Naive thymus-derived CD4-positive, alpha-beta T cell (primary cell): ENCODE measurements at regions of chr18 and their contacts with region 1.

Region 1: GRCh38 chr18:35029770-35030169 is 11.4 kb upstream of the MAPRE2 start:
- DNase-seq: peak in 7 of 9 donors; percentile 34 to 58 (median 55)
- ATAC-seq: peak; percentile 65
- H3K4me3 ChIP-seq: peak overlapping the region; percentile 41
- H3K4me3 Mint-ChIP-seq: peak overlapping the region; percentile 78 to 93 (median 88)
- H3K27ac ChIP-seq: peak overlapping the region; percentile 79
- H3K27ac Mint-ChIP-seq: peak overlapping the region; percentile 89 to 98 (median 96)
- H3K4me1 ChIP-seq: peaks cover 34 to 53% of the 10 kb centered on the region in 2 donors
- H3K4me1 Mint-ChIP-seq: peaks cover 34 to 75% (median 69%) of the 10 kb centered on the region in 7 donors
- H3K27me3 ChIP-seq: no peaks in the 10 kb centered on the region
- H3K27me3 Mint-ChIP-seq: no peaks in the 10 kb centered on the region

Region 2: DNA sequence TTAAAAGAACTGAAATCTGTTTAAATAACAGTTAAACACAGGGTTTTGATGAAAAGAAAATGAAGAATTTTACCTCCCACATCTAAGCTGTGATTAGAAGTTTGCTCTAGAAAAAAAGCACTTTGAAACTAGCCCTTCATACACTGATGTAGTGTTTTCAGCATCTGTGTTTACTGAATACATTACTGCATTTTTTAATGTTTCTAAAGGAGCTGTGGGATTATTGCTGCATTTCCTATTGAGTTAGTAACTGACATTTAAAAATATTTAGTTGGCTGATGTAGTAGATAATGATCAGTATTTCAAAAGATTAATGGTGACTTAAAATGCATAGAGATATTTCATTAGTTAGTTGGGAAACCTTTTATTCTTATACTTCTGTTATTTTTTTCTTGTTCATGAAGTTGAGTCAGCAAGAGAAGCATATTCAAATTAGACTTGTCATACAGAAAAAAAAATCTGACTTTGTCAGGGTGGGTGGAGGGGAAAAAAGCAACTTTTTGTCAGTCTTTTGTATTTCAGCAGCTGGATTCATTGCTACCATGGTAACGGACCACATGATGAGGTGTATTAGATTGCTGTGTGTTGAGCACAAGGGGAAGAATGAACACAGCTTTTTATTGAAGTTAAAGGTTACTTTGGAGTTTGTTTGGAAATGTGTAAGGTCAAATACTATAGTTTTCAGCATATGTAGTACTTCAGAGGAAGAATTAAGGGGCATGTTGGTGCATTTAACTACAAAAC is 319.9 kb before region 1 on chr18 and contains the start of gene DTNA:
- CTCF ChIA-PET with region 1: no interaction called
- POLR2A ChIA-PET with region 1: no interaction called
- intact Hi-C with region 1: no loop called
- DNase-seq: no peak
- ATAC-seq: peak; percentile 72
- H3K4me3 ChIP-seq: no peak within 1 kb of the TSS
- H3K4me3 Mint-ChIP-seq: no peak within 1 kb of the TSS
- H3K27ac ChIP-seq: no peak within 1 kb of the TSS
- H3K27ac Mint-ChIP-seq: no peak within 1 kb of the TSS
- H3K4me1 ChIP-seq: no peaks in the 10 kb centered on the region
- H3K4me1 Mint-ChIP-seq: no peaks in the 10 kb centered on the region
- H3K27me3 ChIP-seq: no peaks in the 10 kb centered on the region
- H3K27me3 Mint-ChIP-seq: peaks cover 2 to 22% (median 11%) of the 10 kb centered on the region in 5 donors
- total RNA-seq, gene DTNA: 0.49 to 1.5 (median 0.63) TPM in 4 of 5 experiments, not detected in the other

Region 3: DNA sequence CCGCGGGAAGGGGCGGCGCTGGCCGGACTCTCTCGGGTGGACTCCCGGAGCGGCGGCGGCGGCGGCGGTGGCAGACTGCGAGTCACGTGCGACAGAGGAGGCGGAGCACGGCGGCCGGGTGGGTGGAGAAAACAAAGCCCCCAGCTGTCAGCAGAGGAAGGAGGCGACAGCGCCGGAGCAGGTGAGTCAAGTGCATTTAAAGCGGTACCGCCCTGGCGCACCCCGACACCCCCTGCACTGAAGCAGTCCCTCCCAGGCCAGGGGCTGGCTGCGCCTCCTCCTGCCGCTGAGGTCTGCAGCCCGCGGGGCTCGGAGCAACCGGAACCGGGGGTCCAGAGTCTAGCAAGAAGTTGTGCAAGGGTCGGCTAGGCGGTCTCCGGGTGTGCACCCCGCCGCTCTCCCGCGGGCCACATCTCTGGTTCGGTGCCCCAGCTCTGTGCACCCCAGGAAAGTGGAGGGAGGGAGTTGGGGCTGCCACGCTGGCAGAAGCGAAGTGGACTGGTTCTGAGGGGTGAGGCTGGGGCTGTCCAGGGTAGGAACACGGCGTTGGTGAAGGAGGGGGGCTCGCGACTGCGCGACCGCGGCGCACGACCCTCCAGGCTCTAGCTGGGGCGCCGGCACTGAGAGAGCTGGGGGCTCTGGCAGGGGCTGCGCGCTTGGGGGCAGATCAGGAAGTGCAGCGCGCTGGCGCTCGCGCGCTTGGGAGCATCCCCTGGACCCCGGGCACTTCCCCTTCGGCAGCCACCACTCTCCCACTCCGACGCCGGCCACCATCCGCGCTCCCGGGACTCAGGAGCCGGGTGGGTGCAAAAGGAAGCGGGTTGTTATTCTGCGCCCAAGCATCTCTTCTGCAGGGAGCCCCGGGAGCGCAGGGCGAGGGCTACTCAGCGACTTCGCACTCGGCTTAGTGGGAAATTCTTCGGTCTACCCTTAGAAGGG is 52.6 kb before region 1 on chr18:
- CTCF ChIA-PET with region 1: no interaction called
- POLR2A ChIA-PET with region 1: interaction called, 3 read pairs
- intact Hi-C with region 1: loop called in 1 of 2 experiments (anchors 1 kb)
- DNase-seq: peak; percentile 60 to 78 (median 72)
- ATAC-seq: peak; percentile 84
- H3K4me3 ChIP-seq: peak overlapping the region; percentile 74
- H3K4me3 Mint-ChIP-seq: peak overlapping the region; percentile 89 to 99 (median 94)
- H3K27ac ChIP-seq: peak overlapping the region; percentile 54
- H3K27ac Mint-ChIP-seq: peak overlapping the region in 6 of 9 donors; percentile 24 to 72 (median 39)
- H3K4me1 ChIP-seq: no peaks in the 10 kb centered on the region
- H3K4me1 Mint-ChIP-seq: peaks cover 18 to 37% (median 24%) of the 10 kb centered on the region in 7 donors
- H3K27me3 ChIP-seq: peaks cover 0 to 3% of the 10 kb centered on the region in 2 donors
- H3K27me3 Mint-ChIP-seq: peaks cover 0 to 66% (median 0%) of the 10 kb centered on the region in 5 donors

Region 4: GRCh38 chr18:35122586-35123224 is 92.9 kb after region 1 on chr18:
- CTCF ChIA-PET with region 1: interaction called, 7 read pairs
- POLR2A ChIA-PET with region 1: no interaction called
- intact Hi-C with region 1: loop called in 1 of 2 experiments (anchors 5 kb)
- DNase-seq: peak in 5 of 9 donors; percentile 3 to 47 (median 33)
- ATAC-seq: peak; percentile 75
- H3K4me3 ChIP-seq: no peak overlapping the region
- H3K4me3 Mint-ChIP-seq: peak overlapping the region in 8 of 10 donors; percentile 14 to 64 (median 40)
- H3K27ac ChIP-seq: no peak overlapping the region
- H3K27ac Mint-ChIP-seq: peak overlapping the region in 8 of 9 donors; percentile 3 to 91 (median 75)
- H3K4me1 ChIP-seq: peaks cover 0 to 9% of the 10 kb centered on the region in 2 donors
- H3K4me1 Mint-ChIP-seq: peaks cover 17 to 70% (median 64%) of the 10 kb centered on the region in 7 donors
- H3K27me3 ChIP-seq: no peaks in the 10 kb centered on the region
- H3K27me3 Mint-ChIP-seq: no peaks in the 10 kb centered on the region

Region 5: DNA sequence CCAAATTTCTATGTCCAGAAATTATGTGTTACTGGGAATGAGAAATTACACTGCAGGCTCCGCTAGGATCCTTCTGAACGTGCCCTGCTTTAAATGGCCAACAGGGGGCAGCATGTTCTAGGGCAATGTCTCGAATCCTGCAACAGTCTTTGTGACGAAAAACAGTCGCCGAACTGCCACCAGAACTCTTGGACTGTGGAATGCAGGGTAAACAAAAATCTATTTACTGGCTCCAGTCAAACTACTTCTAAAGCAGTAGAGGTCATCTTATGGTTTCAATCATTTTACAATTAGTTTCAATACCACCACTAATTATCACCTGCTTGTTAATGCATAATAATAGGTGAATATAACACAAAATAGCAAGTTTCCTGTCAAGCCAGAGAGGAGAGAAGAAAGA is 201.3 kb after region 1 on chr18:
- CTCF ChIA-PET with region 1: interaction called, 14 read pairs
- POLR2A ChIA-PET with region 1: no interaction called
- intact Hi-C with region 1: loop called in 1 of 2 experiments (anchors 1 kb)
- DNase-seq: peak; percentile 49 to 80 (median 73)
- ATAC-seq: peak; percentile 97
- H3K4me3 ChIP-seq: no peak overlapping the region
- H3K4me3 Mint-ChIP-seq: peak overlapping the region in 9 of 10 donors; percentile 1 to 71 (median 53)
- H3K27ac ChIP-seq: no peak overlapping the region
- H3K27ac Mint-ChIP-seq: peak overlapping the region in 1 of 9 donors; percentile 37
- H3K4me1 ChIP-seq: no peaks in the 10 kb centered on the region
- H3K4me1 Mint-ChIP-seq: peaks cover 3 to 5% (median 4%) of the 10 kb centered on the region in 7 donors
- H3K27me3 ChIP-seq: no peaks in the 10 kb centered on the region
- H3K27me3 Mint-ChIP-seq: no peaks in the 10 kb centered on the region

Region 6: DNA sequence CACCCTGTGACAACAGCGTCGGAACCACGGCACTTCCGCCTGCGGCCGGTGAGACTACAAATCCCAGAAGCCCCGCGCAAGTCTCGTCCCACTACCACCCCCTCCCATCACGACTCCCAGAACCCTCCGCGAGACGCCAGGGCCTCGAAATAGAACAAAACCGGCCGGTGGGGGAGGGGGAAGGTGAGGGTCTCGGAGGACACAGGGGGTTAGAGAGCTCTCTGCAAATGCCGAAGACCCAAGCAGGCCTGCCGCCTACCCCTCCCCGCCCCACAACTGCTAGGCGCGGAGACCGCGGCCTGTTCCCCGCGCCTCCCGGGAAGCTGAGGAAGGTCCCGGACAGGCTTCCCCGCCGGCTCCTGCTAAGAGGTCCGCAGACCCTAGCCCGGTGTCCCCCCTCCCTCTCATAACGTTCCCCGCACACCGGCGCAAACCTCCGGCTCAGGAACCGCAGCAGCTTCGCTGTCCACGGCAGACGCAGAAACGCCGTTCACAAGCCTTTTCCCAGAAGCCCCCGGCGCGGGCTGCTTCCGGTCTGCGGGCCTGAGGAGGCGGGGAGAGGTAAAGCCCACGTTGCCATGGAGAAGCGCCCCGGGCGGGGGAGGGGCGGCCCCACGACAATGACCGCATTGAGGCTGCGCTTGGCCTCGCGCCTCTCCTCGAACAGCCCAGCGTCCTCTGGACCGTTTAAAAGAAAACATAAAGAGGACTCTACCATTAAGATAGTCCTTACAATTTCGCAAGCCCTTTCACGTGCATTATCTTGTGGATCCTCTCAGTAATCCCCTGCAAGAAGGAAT is 314.4 kb after region 1 on chr18 and contains the start of gene ZNF24:
- CTCF ChIA-PET with region 1: no interaction called
- POLR2A ChIA-PET with region 1: interaction called, 8 read pairs
- intact Hi-C with region 1: loop called (anchors 1 to 5 kb)
- DNase-seq: peak; percentile 83 to 92 (median 87)
- ATAC-seq: peak; percentile 92
- H3K4me3 ChIP-seq: peak within 1 kb of the TSS; percentile 96
- H3K4me3 Mint-ChIP-seq: peak within 1 kb of the TSS; percentile 93 to 100 (median 98)
- H3K27ac ChIP-seq: peak within 1 kb of the TSS; percentile 100
- H3K27ac Mint-ChIP-seq: peak within 1 kb of the TSS; percentile 91 to 98 (median 98)
- H3K4me1 ChIP-seq: peaks cover 23 to 25% of the 10 kb centered on the region in 2 donors
- H3K4me1 Mint-ChIP-seq: peaks cover 30 to 56% (median 45%) of the 10 kb centered on the region in 7 donors
- H3K27me3 ChIP-seq: no peaks in the 10 kb centered on the region
- H3K27me3 Mint-ChIP-seq: no peaks in the 10 kb centered on the region
- total RNA-seq, gene ZNF24: 55.6 to 98.1 (median 80.8) TPM

Region 7: GRCh38 chr18:35386600-35387351 is 357.0 kb after region 1 on chr18:
- CTCF ChIA-PET with region 1: interaction called, 3 read pairs
- POLR2A ChIA-PET with region 1: no interaction called
- intact Hi-C with region 1: loop called (anchors 1 to 2 kb)
- DNase-seq: peak in 8 of 9 donors; percentile 45 to 78 (median 72)
- ATAC-seq: peak; percentile 95
- H3K4me3 ChIP-seq: no peak overlapping the region
- H3K4me3 Mint-ChIP-seq: peak overlapping the region in 1 of 10 donors; percentile 26
- H3K27ac ChIP-seq: no peak overlapping the region
- H3K27ac Mint-ChIP-seq: peak overlapping the region in 1 of 9 donors; percentile 48
- H3K4me1 ChIP-seq: no peaks in the 10 kb centered on the region
- H3K4me1 Mint-ChIP-seq: peaks cover 0 to 11% (median 5%) of the 10 kb centered on the region in 7 donors
- H3K27me3 ChIP-seq: no peaks in the 10 kb centered on the region
- H3K27me3 Mint-ChIP-seq: peaks cover 13 to 41% (median 28%) of the 10 kb centered on the region in 5 donors

Region 8: GRCh38 chr18:35972197-35973052 is 942.7 kb after region 1 on chr18 and contains the start of gene RMP24:
- CTCF ChIA-PET with region 1: no interaction called
- POLR2A ChIA-PET with region 1: no interaction called
- intact Hi-C with region 1: loop called in 1 of 2 experiments (anchors 5 kb)
- DNase-seq: peak; percentile 80 to 93 (median 90)
- ATAC-seq: peak; percentile 94
- H3K4me3 ChIP-seq: peak within 1 kb of the TSS; percentile 76
- H3K4me3 Mint-ChIP-seq: peak within 1 kb of the TSS; percentile 83 to 100 (median 96)
- H3K27ac ChIP-seq: peak within 1 kb of the TSS; percentile 82
- H3K27ac Mint-ChIP-seq: peak within 1 kb of the TSS; percentile 91 to 99 (median 96)
- H3K4me1 ChIP-seq: peaks cover 33% of the 10 kb centered on the region in 2 donors
- H3K4me1 Mint-ChIP-seq: peaks cover 36 to 78% (median 67%) of the 10 kb centered on the region in 7 donors
- H3K27me3 ChIP-seq: no peaks in the 10 kb centered on the region
- H3K27me3 Mint-ChIP-seq: no peaks in the 10 kb centered on the region